ENCODE measurements at regions of chr1 and their contacts with region 1.

Region 1: DNA sequence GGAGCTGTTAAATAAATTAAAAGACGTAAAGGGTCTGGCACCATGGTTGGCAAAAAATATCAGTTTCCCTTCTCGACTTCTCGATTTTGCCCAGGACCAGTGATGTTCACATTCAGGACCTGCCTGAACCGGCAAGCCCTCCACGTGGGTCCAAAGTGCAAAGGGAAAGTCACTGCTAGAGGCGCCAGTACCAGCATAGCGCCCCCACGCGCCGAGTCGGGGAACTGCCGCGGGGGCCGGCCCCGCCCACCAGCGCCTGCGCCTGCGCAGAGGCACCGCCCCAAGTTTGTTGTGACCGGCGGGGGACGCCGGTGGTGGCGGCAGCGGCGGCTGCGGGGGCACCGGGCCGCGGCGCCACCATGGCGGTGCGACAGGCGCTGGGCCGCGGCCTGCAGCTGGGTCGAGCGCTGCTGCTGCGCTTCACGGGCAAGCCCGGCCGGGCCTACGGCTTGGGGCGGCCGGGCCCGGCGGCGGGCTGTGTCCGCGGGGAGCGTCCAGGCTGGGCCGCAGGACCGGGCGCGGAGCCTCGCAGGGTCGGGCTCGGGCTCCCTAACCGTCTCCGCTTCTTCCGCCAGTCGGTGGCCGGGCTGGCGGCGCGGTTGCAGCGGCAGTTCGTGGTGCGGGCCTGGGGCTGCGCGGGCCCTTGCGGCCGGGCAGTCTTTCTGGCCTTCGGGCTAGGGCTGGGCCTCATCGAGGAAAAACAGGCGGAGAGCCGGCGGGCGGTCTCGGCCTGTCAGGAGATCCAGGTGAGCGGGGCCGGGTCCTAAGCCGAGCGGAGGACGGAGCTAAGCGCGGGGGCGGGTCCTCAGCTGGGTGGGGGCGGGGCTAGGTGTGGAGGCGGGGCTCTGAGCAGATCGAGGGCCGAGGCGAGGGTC is at the start of gene PINK1:
- DNase-seq: peak; percentile 85
- ATAC-seq: peak; percentile 92
- H3K4me3 Mint-ChIP-seq: peak within 1 kb of the TSS; percentile 78
- H3K27ac Mint-ChIP-seq: peak within 1 kb of the TSS; percentile 72
- H3K4me1 Mint-ChIP-seq: peaks cover 7% of the 10 kb centered on the region
- H3K27me3 Mint-ChIP-seq: peaks cover 10% of the 10 kb centered on the region
- total RNA-seq, gene PINK1: 3.7 to 5.3 TPM

Region 2: GRCh38 chr1:20507564-20508410 is 125.6 kb before region 1 on chr1 and contains the start of gene MUL1:
- CTCF ChIA-PET with region 1: interaction called, 15 read pairs
- DNase-seq: peak; percentile 97
- ATAC-seq: peak; percentile 97
- H3K4me3 Mint-ChIP-seq: peak within 1 kb of the TSS; percentile 87
- H3K27ac Mint-ChIP-seq: peak within 1 kb of the TSS; percentile 87
- H3K4me1 Mint-ChIP-seq: peaks cover 22% of the 10 kb centered on the region
- H3K27me3 Mint-ChIP-seq: no peaks in the 10 kb centered on the region
- total RNA-seq, gene MUL1: 14.9 to 19.5 TPM

Region 3: DNA sequence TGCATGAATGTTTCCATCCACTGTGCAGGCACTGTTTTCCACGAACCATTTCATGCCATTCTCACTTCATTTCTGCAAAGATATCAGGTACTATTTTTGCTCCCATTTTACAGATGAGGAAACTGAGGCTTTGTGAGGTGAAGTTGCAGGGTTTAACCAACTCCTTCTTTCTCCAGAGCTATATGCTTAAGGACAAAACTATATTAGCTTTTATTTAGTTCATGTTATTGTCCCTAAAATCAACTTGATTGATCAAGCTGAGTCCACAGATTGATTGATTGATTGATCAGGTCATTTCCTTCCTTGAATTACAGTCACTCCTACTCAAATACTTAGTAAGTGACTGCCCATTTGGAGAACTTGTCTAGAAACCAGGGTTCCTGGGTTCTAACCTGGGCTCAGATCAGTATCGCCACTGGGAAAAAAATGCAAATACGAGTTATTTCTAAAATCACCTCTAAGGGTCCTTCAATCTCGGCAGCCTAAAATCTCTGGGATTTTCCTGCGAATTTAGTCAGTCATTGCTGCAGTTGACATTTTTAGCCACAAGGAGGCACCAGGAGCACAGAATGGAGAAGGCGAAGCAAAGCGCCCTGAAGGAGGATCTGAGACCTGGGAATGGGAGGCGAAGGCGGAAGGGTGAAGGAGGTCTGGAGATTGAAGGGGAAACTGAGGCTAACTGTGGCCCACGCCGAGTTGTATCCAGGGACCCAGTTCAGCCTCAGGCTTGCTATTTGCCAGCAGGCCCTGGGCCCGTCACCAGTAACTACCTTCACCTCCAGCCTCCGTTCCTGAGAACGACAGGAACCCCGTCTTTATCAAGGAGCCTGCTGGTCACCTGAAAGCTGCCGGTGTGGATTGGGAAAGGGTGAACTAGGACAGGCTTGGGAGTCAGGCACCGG is 111.2 kb before region 1 on chr1:
- CTCF ChIA-PET with region 1: interaction called, 10 read pairs
- DNase-seq: peak; percentile 76
- ATAC-seq: peak; percentile 60
- H3K4me3 Mint-ChIP-seq: no peak overlapping the region
- H3K27ac Mint-ChIP-seq: no peak overlapping the region
- H3K4me1 Mint-ChIP-seq: peaks cover 5% of the 10 kb centered on the region
- H3K27me3 Mint-ChIP-seq: peaks cover 40% of the 10 kb centered on the region

Region 4: GRCh38 chr1:20574686-20575540 is 58.5 kb before region 1 on chr1:
- CTCF ChIA-PET with region 1: interaction called, 37 read pairs
- DNase-seq: peak; percentile 70
- ATAC-seq: peak; percentile 79
- H3K4me3 Mint-ChIP-seq: no peak overlapping the region
- H3K27ac Mint-ChIP-seq: no peak overlapping the region
- H3K4me1 Mint-ChIP-seq: no peaks in the 10 kb centered on the region
- H3K27me3 Mint-ChIP-seq: peaks cover 22% of the 10 kb centered on the region

Region 5: GRCh38 chr1:20661207-20662109 is 28.0 kb after region 1 on chr1 and contains the start of gene DDOST:
- CTCF ChIA-PET with region 1: interaction called, 39 read pairs
- DNase-seq: peak; percentile 98
- ATAC-seq: peak; percentile 98
- H3K4me3 Mint-ChIP-seq: peak within 1 kb of the TSS; percentile 83
- H3K27ac Mint-ChIP-seq: peak within 1 kb of the TSS; percentile 99
- H3K4me1 Mint-ChIP-seq: peaks cover 37% of the 10 kb centered on the region
- H3K27me3 Mint-ChIP-seq: no peaks in the 10 kb centered on the region
- total RNA-seq, gene DDOST: 137 to 170 TPM

Region 6: GRCh38 chr1:20666804-20667203 is 33.4 kb after region 1 on chr1:
- CTCF ChIA-PET with region 1: interaction called, 39 read pairs
- DNase-seq: peak; percentile 51
- ATAC-seq: peak; percentile 72
- H3K4me3 Mint-ChIP-seq: no peak overlapping the region
- H3K27ac Mint-ChIP-seq: no peak overlapping the region
- H3K4me1 Mint-ChIP-seq: peaks cover 15% of the 10 kb centered on the region
- H3K27me3 Mint-ChIP-seq: no peaks in the 10 kb centered on the region

Measured in activated CD8-positive, alpha-beta memory T cell treated with anti-CD3 and anti-CD28 coated beads, Interleukin-2, amount 10 ng/mL, durations not matched to agents 7 days and 5 days (primary cell).